Natural killer cell (primary cell): ENCODE measurements at regions of chr3 and their contacts with region 1.

Region 1: GRCh38 chr3:5006755-5007202 is 27.5 kb downstream of the BHLHE40 start:
- DNase-seq: peak; percentile 79 to 93
- ATAC-seq: peak; percentile 80 to 89 (median 82)
- H3K4me3 ChIP-seq: no peak overlapping the region
- H3K4me3 Mint-ChIP-seq: peak overlapping the region; percentile 3
- H3K27ac ChIP-seq: peak overlapping the region; percentile 75
- H3K27ac Mint-ChIP-seq: peak overlapping the region; percentile 93 to 96
- H3K4me1 ChIP-seq: peaks cover 77% of the 10 kb centered on the region
- H3K4me1 Mint-ChIP-seq: peaks cover 43 to 49% of the 10 kb centered on the region in 2 donors
- H3K27me3 ChIP-seq: no peaks in the 10 kb centered on the region
- H3K27me3 Mint-ChIP-seq: no peaks in the 10 kb centered on the region
- CTCF ChIP-seq: no peak

Region 2: GRCh38 chr3:4986782-4987537 is 19.8 kb before region 1 on chr3:
- intact Hi-C with region 1: loop called (anchors 1 kb)
- DNase-seq: peak; percentile 79 to 82
- ATAC-seq: peak; percentile 69 to 88 (median 71)
- H3K4me3 ChIP-seq: peak overlapping the region; percentile 50
- H3K4me3 Mint-ChIP-seq: peak overlapping the region; percentile 87
- H3K27ac ChIP-seq: peak overlapping the region; percentile 85
- H3K27ac Mint-ChIP-seq: peak overlapping the region; percentile 98 to 100
- H3K4me1 ChIP-seq: peaks cover 54% of the 10 kb centered on the region
- H3K4me1 Mint-ChIP-seq: peaks cover 51 to 59% of the 10 kb centered on the region in 2 donors
- H3K27me3 ChIP-seq: no peaks in the 10 kb centered on the region
- H3K27me3 Mint-ChIP-seq: no peaks in the 10 kb centered on the region
- CTCF ChIP-seq: no peak

Region 3: GRCh38 chr3:5026331-5027218 is 19.8 kb after region 1 on chr3:
- intact Hi-C with region 1: loop called (anchors 1 kb)
- DNase-seq: peak; percentile 73 to 82
- ATAC-seq: peak; percentile 79 to 91 (median 86)
- H3K4me3 ChIP-seq: peak overlapping the region; percentile 75
- H3K4me3 Mint-ChIP-seq: peak overlapping the region; percentile 89
- H3K27ac ChIP-seq: peak overlapping the region; percentile 84
- H3K27ac Mint-ChIP-seq: peak overlapping the region; percentile 86 to 92
- H3K4me1 ChIP-seq: peaks cover 17% of the 10 kb centered on the region
- H3K4me1 Mint-ChIP-seq: peaks cover 9 to 15% of the 10 kb centered on the region in 2 donors
- H3K27me3 ChIP-seq: no peaks in the 10 kb centered on the region
- H3K27me3 Mint-ChIP-seq: peaks cover 0 to 2% of the 10 kb centered on the region in 2 donors
- CTCF ChIP-seq: peak; percentile 61

Region 4: DNA sequence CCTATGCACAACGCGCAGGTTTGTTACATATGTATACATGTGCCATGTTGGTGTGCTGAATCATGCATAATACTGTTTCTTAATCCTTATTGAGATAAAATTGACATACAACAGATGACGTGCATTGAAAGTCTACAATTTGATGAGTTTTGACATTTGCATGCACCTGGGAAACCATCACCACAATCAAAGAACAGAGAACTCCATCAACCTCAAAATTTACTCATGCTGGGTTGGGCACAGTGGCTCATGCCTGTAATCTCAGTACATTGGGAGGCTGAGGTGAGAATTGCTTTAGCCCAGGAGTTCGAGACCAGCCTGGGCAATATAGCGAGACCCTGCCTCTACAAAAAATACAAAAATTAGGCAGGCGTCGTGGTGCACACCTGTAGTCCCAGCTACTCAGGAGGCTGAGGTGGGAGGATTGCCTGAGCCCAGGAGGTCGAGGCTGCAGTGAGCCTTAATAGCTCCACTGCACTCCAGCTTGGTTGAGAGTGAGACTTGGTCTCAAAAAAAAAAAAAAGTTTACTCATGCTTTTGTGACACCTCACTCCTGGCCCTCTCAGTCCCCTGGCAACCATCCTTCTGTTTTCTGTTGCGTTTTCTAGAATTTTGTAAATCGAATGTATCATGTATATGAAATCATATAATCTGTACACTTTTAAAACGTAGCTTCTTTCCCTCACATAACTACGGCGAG is 29.1 kb after region 1 on chr3:
- intact Hi-C with region 1: loop called (anchors 1 kb)
- DNase-seq: no peak
- ATAC-seq: no peak
- H3K4me3 ChIP-seq: no peak overlapping the region
- H3K4me3 Mint-ChIP-seq: no peak overlapping the region
- H3K27ac ChIP-seq: no peak overlapping the region
- H3K27ac Mint-ChIP-seq: peak overlapping the region in 1 of 2 donors; percentile 91
- H3K4me1 ChIP-seq: peaks cover 36% of the 10 kb centered on the region
- H3K4me1 Mint-ChIP-seq: peaks cover 45 to 50% of the 10 kb centered on the region in 2 donors
- H3K27me3 ChIP-seq: no peaks in the 10 kb centered on the region
- H3K27me3 Mint-ChIP-seq: no peaks in the 10 kb centered on the region
- CTCF ChIP-seq: no peak